PC-9 (cell line): ENCODE measurements at regions of chr1 and their contacts with region 1.

Region 1: DNA sequence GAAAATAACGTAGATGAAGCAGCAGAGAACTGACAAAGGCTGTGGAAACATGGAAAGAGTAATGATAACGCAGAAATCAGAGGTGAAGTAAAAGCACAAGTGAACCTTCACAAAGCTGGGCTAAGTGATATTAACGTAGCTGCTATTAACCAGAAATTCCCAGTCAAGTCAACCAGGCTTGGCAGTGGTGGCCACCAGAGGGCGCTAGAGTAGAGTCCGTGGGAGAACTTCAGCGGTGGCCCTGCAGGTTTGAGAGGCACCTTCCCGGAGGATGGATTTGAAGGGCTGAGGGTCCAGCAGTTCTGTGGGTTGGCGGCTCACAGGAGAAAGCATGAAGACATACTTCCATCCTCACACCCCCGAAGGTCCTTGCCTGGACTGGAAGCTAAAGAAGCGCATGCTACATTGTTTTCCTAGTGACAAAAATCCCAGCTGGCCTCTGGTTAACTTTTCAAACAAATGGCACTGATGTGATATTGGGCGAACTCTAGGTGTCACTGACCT is 81.7 kb upstream of the ZNF648 start:
- DNase-seq: peak; percentile 67 to 85
- H3K4me3 ChIP-seq: no peak overlapping the region
- H3K27ac ChIP-seq: no peak overlapping the region
- H3K4me1 ChIP-seq: peaks cover 48% of the 10 kb centered on the region
- H3K27me3 ChIP-seq: no peaks in the 10 kb centered on the region
- CTCF ChIP-seq: peak; percentile 97

Region 2: DNA sequence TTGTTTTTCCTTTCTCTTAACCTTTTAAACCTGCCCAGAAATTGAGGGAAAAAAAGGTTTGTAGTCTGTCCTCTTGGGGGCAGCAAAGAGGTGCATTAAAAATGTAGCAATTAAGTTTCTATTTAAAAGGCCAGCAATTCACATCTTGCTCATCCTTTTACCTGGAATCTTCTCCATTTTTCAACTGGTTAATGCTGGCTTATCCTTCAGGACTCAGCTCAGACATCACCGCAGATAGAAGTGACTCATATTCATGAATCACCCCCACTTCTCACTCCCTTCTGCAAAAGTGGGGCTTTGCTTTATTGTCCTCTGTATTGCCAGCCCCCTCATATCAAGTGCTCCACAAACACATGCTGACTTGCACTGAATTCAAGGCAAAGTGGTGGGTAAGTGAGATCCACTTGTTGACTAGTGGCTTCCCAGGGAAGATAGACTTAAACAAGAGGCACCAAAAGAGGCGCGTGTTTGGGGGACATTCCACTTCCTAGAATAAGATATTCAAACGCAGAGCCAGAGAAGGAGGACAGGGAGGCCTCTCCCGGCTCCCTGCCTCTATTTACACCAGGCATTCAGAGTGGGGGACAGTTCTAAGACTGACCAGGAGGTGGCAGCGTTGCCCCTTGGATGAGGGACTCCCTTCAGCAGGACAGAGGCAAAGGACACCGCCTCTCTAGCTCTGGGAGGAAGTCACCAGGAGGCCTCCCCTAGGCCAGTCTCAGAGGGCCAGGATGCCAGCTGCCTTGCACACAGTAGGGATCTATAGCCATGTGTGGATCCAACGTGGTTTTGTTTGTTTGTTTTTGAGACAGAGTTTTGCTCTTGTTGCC is 58.5 kb before region 1 on chr1:
- CTCF ChIA-PET with region 1: interaction called, 16 read pairs
- POLR2A ChIA-PET with region 1: interaction called, 35 read pairs
- intact Hi-C with region 1: loop called (anchors 1 kb)
- DNase-seq: peak; percentile 59 to 82
- H3K4me3 ChIP-seq: no peak overlapping the region
- H3K27ac ChIP-seq: no peak overlapping the region
- H3K4me1 ChIP-seq: peaks cover 30% of the 10 kb centered on the region
- H3K27me3 ChIP-seq: 0 out of 2 replicates have a peak, but pooled peaks cover 3% of the 10 kb centered on the region
- CTCF ChIP-seq: peak; percentile 90

Region 3: GRCh38 chr1:182185813-182186756 is 42.9 kb after region 1 on chr1:
- CTCF ChIA-PET with region 1: interaction called, 10 read pairs
- POLR2A ChIA-PET with region 1: interaction called, 4 read pairs
- intact Hi-C with region 1: loop called (anchors 1 kb)
- DNase-seq: peak; percentile 76 to 97
- H3K4me3 ChIP-seq: peak overlapping the region; percentile 12; the same call in 1 of the 2 replicates
- H3K27ac ChIP-seq: peak overlapping the region; percentile 66
- H3K4me1 ChIP-seq: peaks cover 56% of the 10 kb centered on the region
- H3K27me3 ChIP-seq: no peaks in the 10 kb centered on the region
- CTCF ChIP-seq: no peak

Region 4: GRCh38 chr1:182244438-182244837 is 101.2 kb after region 1 on chr1:
- CTCF ChIA-PET with region 1: no interaction called
- POLR2A ChIA-PET with region 1: interaction called, 4 read pairs
- intact Hi-C with region 1: loop called (anchors 5 kb)
- DNase-seq: peak; percentile 16 to 79
- H3K4me3 ChIP-seq: no peak overlapping the region
- H3K27ac ChIP-seq: no peak overlapping the region
- H3K4me1 ChIP-seq: peaks cover 18% of the 10 kb centered on the region
- H3K27me3 ChIP-seq: no peaks in the 10 kb centered on the region
- CTCF ChIP-seq: no peak

Region 5: GRCh38 chr1:182374101-182374834 is 231.1 kb after region 1 on chr1:
- CTCF ChIA-PET with region 1: no interaction called
- POLR2A ChIA-PET with region 1: no interaction called
- intact Hi-C with region 1: no loop called
- DNase-seq: peak in 1 of 2 experiments; percentile 5
- H3K4me3 ChIP-seq: no peak overlapping the region
- H3K27ac ChIP-seq: no peak overlapping the region
- H3K4me1 ChIP-seq: peaks cover 20% of the 10 kb centered on the region
- H3K27me3 ChIP-seq: no peaks in the 10 kb centered on the region
- CTCF ChIP-seq: no peak

Region 6: DNA sequence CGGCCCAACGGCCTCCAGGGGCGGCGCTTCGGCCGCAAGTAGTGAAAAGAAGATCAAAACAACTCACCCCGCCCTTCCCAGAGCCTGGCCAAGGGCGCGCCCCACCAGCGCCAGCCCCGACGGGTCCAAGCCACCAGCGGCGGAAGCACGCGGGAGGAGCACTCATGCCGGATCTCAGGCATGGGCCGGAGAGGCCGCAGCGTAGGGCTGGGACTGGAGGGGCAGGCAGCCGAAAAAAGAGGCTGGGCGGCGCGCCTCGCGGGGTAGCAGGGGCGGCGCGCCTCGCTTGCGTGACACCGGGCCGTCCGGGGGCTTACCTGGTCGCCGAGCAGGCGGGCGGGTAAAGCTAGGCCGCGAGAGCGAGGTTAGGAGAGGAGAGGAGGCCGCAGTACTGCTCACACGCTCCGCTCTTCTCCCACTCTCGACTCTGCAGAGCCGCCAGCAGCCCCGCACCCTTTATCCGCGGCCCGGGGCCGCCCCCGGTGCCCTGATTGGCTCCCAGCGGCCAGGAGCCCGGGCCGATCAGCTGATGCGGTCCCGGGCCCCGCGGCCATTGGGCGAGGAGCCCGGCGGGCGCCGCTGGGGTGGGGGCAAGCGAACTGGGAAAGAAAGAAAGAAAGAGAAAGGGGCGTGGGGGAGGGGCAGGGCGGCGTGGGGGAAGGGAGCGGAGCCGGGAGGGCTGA is 248.3 kb after region 1 on chr1 and contains the start of gene GLUL:
- CTCF ChIA-PET with region 1: interaction called, 33 read pairs
- POLR2A ChIA-PET with region 1: interaction called, 5 read pairs
- intact Hi-C with region 1: loop called (anchors 1 kb)
- DNase-seq: peak; percentile 73 to 89
- H3K4me3 ChIP-seq: peak within 1 kb of the TSS; percentile 68
- H3K27ac ChIP-seq: peak within 1 kb of the TSS; percentile 50; the same call in 1 of the 2 replicates
- H3K4me1 ChIP-seq: peaks cover 23% of the 10 kb centered on the region
- H3K27me3 ChIP-seq: no peaks in the 10 kb centered on the region
- CTCF ChIP-seq: no peak; the same call in 1 of the 2 replicates
- total RNA-seq, gene GLUL: 335 and 348 TPM in 2 replicates

Region 7: DNA sequence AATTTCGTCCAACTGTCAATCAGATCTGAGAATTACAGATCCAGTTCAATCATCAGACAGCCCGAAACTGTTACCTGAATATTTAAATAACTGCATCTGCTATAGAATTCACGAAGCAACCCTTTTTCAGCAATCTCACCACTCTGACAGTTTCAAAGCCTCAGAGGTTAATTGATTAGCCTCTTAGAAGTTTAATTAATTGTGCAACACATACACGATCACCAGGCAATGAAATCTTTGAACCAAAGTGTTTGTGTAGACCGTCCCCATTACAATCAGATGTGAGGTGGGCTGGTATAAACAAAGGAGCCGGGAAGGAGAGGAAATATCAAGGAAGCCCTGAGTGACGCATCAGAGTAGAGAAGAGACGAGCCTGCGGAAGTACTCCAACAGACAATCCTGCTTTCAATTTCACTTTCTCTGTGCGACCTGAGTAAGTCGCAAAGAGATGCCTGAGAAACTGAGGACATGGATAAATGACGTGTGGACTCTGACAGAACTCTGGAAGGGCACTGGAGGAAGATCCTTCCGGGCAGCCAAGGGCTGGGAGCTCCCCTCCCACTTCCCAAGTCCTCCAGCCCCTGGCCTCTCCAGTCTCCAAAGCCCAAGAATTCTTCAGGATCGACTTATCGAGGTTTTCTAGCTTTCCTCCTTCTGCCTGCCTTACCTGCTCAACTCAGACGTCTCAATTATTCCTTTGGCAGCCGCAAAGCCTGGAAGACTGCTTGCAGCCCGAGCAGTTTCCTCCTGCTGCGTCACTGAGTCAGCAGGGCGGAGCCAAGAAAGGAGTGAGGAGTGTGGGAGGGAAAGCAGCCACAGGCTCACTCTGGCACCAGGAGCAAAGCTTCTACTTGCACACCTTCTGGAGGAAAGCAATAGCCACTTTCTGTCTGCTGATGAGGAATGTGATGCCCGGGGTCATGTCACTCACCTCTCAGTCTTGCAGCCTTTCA is 445.6 kb after region 1 on chr1 and contains the start of gene RNASEL:
- CTCF ChIA-PET with region 1: no interaction called
- POLR2A ChIA-PET with region 1: interaction called, 13 read pairs
- intact Hi-C with region 1: no loop called
- DNase-seq: peak; percentile 69 to 78
- H3K4me3 ChIP-seq: peak within 1 kb of the TSS; percentile 64
- H3K27ac ChIP-seq: peak within 1 kb of the TSS; percentile 69
- H3K4me1 ChIP-seq: peaks cover 12% of the 10 kb centered on the region
- H3K27me3 ChIP-seq: no peaks in the 10 kb centered on the region
- CTCF ChIP-seq: no peak
- total RNA-seq, gene RNASEL: 4.9 and 6.3 TPM in 2 replicates

Region 8: GRCh38 chr1:182781841-182782586 is 638.8 kb after region 1 on chr1:
- CTCF ChIA-PET with region 1: no interaction called
- POLR2A ChIA-PET with region 1: interaction called, 3 read pairs
- intact Hi-C with region 1: loop called (anchors 1 kb)
- DNase-seq: peak; percentile 45 to 66
- H3K4me3 ChIP-seq: no peak overlapping the region
- H3K27ac ChIP-seq: no peak overlapping the region
- H3K4me1 ChIP-seq: no peaks in the 10 kb centered on the region
- H3K27me3 ChIP-seq: no peaks in the 10 kb centered on the region
- CTCF ChIP-seq: peak; percentile 83